Heart right ventricle (tissue), 16 donors: ENCODE measurements at regions of chr15 and their contacts with region 1.

Region 1: GRCh38 chr15:42640103-42640502 is 64.7 kb downstream of the STARD9 start:
- DNase-seq: no peak
- ATAC-seq: no peak
- H3K4me3 ChIP-seq: no peak overlapping the region
- H3K27ac ChIP-seq: no peak overlapping the region
- H3K4me1 ChIP-seq: no peaks in the 10 kb centered on the region
- H3K27me3 ChIP-seq: no peaks in the 10 kb centered on the region
- CTCF ChIP-seq: no peak

Region 2: GRCh38 chr15:42581272-42581730 is 58.8 kb before region 1 on chr15:
- intact Hi-C with region 1: loop called in 4 of 10 experiments (anchors 5 to 10 kb)
- DNase-seq: peak; percentile 88 to 90
- ATAC-seq: peak; percentile 91 to 96 (median 95)
- H3K4me3 ChIP-seq: peak overlapping the region in 9 of 10 donors; percentile 28 to 56 (median 51)
- H3K27ac ChIP-seq: peak overlapping the region; percentile 57 to 85 (median 76)
- H3K4me1 ChIP-seq: peaks cover 0 to 88% (median 75%) of the 10 kb centered on the region in 9 donors
- H3K27me3 ChIP-seq: no peaks in the 10 kb centered on the region
- CTCF ChIP-seq: peak in 2 of 9 donors; percentile 28 to 39

Region 3: GRCh38 chr15:42591238-42591934 is 48.7 kb before region 1 on chr15:
- intact Hi-C with region 1: loop called in 4 of 10 experiments (anchors 10 kb)
- DNase-seq: no peak
- ATAC-seq: no peak
- H3K4me3 ChIP-seq: no peak overlapping the region
- H3K27ac ChIP-seq: no peak overlapping the region
- H3K4me1 ChIP-seq: peaks cover 0 to 69% (median 37%) of the 10 kb centered on the region in 9 donors
- H3K27me3 ChIP-seq: no peaks in the 10 kb centered on the region
- CTCF ChIP-seq: peak in 6 of 9 donors; percentile 14 to 42 (median 35)